A549 (cell line): ENCODE measurements at regions of chr20 and their contacts with region 1.

Region 1: GRCh38 chr20:20017001-20017843 is at the start of gene NAA20:
- DNase-seq: peak; percentile 98
- ATAC-seq: peak; percentile 99
- H3K4me3 ChIP-seq: peak within 1 kb of the TSS; percentile 95
- H3K27ac ChIP-seq: peak within 1 kb of the TSS; percentile 93 to 94
- H3K4me1 ChIP-seq: peaks cover 22% of the 10 kb centered on the region
- CTCF ChIP-seq: peak; percentile 59
- EP300 ChIP-seq: no peak
- POLR2A ChIP-seq: peak; percentile 62
- RAD21 ChIP-seq: peak; percentile 59 to 66
- polyA plus RNA-seq, gene NAA20: 154 and 219 TPM in 2 replicates

Region 2: DNA sequence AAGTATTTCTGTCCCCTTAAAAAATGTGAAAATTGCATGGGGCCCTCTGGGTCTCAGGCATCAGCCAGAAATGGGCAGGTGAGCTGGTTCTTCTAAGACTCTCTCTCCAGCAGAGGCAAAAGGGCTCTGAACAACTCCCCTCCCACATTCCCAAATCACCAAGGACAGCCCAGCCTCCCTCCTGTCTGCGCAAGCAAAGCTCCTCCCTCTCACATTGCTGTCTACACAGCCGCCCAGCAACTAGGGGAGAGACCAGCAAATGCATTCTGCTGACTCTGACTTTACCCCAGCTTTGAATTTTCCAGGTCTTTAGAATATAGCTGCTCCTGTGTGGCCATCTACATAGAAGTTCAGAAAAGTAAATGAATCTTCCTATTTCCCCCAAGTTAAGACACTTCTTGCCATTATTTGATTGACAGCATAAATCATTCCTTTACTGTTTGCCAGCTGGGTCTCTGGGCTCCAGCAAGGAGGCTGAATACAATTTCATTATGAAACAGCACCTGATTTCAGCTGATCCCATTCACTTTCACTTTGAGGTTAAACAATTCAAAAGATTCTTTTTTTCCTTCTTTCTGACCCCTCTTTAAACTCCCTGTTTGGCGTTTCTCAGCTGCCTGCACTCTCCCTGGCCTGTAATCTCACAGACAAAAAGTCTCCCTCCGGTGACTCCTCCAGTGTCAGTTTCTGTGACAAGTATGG is 464.9 kb before region 1 on chr20:
- CTCF ChIA-PET with region 1: no interaction called
- POLR2A ChIA-PET with region 1: no interaction called
- DNase-seq: peak; percentile 19 to 25
- ATAC-seq: peak in 1 of 2 experiments; percentile 85; a peak in 3 of 6 replicates
- H3K4me3 ChIP-seq: no peak overlapping the region
- H3K27ac ChIP-seq: no peak overlapping the region
- H3K4me1 ChIP-seq: no peaks in the 10 kb centered on the region
- CTCF ChIP-seq: no peak
- EP300 ChIP-seq: no peak
- POLR2A ChIP-seq: no peak
- RAD21 ChIP-seq: no peak

Region 3: GRCh38 chr20:19770375-19770774 is 246.8 kb before region 1 on chr20:
- CTCF ChIA-PET with region 1: interaction called, 14 read pairs
- POLR2A ChIA-PET with region 1: no interaction called
- DNase-seq: no peak
- ATAC-seq: no peak
- H3K4me3 ChIP-seq: no peak overlapping the region
- H3K27ac ChIP-seq: no peak overlapping the region
- H3K4me1 ChIP-seq: peaks cover 12% of the 10 kb centered on the region
- CTCF ChIP-seq: no peak
- EP300 ChIP-seq: no peak
- POLR2A ChIP-seq: no peak
- RAD21 ChIP-seq: no peak

Region 4: DNA sequence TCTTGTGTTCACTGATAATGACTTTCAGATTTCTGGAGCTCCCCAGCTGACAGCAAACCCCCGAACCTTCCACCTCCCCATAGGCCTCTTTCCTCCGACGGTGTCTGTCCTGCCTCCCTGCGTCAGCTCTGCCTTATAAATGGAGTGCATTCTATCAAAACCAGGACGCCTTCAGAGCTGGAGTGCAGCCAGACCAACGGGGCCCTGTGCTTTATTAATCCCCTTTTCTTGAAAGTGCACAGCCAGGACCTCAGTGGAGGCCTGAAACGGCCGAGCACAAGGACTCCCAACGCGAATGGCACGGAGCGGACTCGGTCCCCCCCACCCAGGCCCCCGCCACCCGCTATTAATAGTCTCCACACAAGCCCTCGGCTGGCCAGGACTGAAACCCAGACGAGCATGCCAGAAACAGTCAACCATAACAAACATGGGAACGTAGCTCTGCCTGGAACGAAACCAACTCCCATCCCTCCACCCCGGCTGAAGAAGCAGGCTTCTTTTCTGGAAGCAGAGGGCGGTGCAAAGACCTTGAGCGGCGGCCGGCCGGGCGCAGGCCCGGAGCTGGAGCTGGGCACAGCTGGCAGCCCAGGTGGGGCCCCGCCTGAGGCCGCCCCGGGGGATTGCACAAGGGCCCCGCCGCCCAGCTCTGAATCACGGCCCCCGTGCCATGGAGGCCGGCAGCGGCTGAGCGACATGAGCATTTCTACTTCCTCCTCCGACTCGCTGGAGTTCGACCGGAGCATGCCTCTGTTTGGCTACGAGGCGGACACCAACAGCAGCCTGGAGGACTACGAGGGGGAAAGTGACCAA is 42.4 kb before region 1 on chr20:
- CTCF ChIA-PET with region 1: interaction called, 8 read pairs
- POLR2A ChIA-PET with region 1: interaction called, 17 read pairs
- DNase-seq: peak; percentile 77 to 89
- ATAC-seq: peak; percentile 83 to 87
- H3K4me3 ChIP-seq: peak overlapping the region; percentile 65
- H3K27ac ChIP-seq: peak overlapping the region; percentile 94 to 95
- H3K4me1 ChIP-seq: peaks cover 40% of the 10 kb centered on the region
- CTCF ChIP-seq: no peak
- EP300 ChIP-seq: no peak
- POLR2A ChIP-seq: peak; percentile 72
- RAD21 ChIP-seq: peak in 1 of 2 experiments; percentile 31; a peak in 3 of 5 replicates

Region 5: GRCh38 chr20:19995220-19995863 is 21.9 kb before region 1 on chr20:
- CTCF ChIA-PET with region 1: interaction called, 19 read pairs
- POLR2A ChIA-PET with region 1: interaction called, 4 read pairs
- DNase-seq: peak; percentile 55 to 61
- ATAC-seq: no peak
- H3K4me3 ChIP-seq: no peak overlapping the region
- H3K27ac ChIP-seq: peak overlapping the region; percentile 90 to 93
- H3K4me1 ChIP-seq: peaks cover 51% of the 10 kb centered on the region
- CTCF ChIP-seq: peak; percentile 94
- EP300 ChIP-seq: no peak
- POLR2A ChIP-seq: no peak
- RAD21 ChIP-seq: peak; percentile 92 to 93

Region 6: DNA sequence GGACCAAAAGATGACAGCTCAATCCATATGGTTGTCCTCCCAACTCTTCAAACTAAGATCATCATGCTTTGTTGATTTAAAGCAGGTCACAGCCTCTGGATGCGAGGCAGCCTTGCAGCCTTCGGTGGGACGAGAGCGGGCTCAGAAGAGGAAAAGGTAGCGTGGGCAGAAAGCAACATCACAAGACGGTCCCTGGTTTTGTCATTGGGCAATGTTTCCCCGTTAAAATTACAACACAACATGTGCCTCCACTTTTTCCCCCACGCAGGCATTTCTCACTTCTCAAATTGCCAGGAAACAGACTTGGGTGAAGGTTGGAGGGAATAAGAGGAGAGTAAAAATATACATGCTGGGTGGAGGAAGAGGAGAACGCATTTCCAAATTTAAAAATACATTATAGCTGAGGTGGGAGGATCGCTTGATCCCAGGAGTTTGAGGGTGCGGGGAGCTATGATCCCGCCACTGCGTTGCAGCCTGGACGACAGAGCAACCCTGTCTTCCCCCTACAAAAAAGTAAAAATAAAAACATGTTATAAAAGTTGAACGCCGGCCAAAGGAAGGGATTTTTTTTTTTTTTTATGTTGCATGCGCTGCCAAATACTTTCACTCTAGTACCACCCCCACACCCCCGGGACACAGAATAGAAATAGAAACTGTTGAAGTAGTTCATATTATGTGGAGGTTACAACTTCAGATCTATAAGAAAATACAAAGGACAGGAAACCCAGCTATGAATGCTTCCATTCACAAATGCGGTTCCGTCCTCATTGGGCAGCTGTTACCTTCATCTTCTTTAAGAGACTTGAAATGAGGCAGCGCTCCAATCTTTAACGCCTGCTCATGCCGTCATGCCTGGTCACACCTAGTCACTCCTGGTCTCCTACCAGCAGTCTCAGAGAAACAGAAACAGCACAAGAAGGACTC is 13.9 kb before region 1 on chr20:
- CTCF ChIA-PET with region 1: interaction called, 27 read pairs
- POLR2A ChIA-PET with region 1: interaction called, 4 read pairs
- DNase-seq: no peak
- ATAC-seq: no peak
- H3K4me3 ChIP-seq: no peak overlapping the region
- H3K27ac ChIP-seq: no peak overlapping the region
- H3K4me1 ChIP-seq: no peaks in the 10 kb centered on the region
- CTCF ChIP-seq: no peak
- EP300 ChIP-seq: no peak
- POLR2A ChIP-seq: no peak
- RAD21 ChIP-seq: no peak

Region 7: DNA sequence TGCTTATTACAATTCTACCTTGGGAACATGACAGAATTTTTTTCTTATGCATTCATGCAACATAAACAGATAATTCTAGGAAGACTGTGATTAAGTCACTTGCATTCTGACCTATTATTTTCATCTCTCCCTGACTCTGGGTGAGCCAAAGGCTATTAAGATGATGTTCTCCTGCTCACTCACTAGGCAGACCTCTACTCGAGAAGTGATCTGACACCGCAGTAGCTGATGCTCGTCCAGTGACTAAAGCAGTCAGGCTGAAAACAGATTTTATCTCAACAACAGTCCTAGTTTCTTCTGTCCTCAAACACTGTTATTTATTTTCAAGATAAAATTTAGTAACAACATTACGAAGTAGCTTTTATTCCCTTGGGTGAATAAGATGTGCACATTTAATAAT is 17.3 kb after region 1 on chr20:
- CTCF ChIA-PET with region 1: interaction called, 12 read pairs
- POLR2A ChIA-PET with region 1: interaction called, 6 read pairs
- DNase-seq: no peak
- ATAC-seq: no peak
- H3K4me3 ChIP-seq: no peak overlapping the region
- H3K27ac ChIP-seq: no peak overlapping the region
- H3K4me1 ChIP-seq: no peaks in the 10 kb centered on the region
- CTCF ChIP-seq: no peak
- EP300 ChIP-seq: no peak
- POLR2A ChIP-seq: no peak
- RAD21 ChIP-seq: no peak

Region 8: DNA sequence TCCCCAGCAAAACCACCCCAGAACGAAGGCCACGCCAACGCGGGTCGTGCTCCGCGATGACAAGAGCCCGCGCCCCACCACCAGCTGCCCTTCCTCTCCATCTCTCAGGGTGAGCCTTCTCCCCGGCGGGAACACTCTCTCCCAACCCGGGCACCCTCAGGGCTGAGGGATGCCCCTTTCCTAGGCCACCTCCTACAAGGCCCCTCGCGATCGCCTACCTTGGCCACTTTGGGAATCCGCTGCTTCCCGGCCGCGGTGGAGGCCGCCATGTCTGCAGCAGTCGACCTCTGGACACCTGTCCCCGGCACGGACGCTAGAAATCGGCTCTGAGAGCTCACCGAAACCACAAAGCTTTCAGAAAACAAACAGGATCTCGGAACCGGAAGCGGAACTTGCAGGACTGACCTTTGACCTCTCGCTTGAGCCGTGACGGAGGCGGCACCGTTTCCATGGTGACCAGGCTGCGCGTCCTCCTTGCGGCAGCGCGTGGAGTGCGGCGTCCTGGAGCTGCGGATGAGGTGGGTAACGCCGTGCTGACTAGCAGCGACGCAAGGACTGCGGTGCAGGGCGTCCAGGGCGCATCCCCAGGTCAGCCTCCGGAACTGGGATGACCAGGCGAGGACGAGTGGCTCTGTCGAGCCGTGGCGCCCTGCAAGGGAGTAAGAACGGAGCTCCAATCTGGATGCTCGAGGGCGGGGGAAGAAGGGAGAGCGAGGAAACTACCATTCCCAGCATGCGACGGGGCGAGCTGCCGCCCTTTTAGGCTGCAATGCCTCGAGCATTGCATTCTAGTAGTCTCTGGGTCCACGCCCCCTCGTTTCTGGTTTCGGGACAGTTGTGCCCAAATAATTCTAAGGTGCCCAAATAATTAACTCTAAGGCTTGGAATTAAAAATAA is 35.1 kb after region 1 on chr20 and contains the starts of genes CFAP61 and CRNKL1:
- CTCF ChIA-PET with region 1: interaction called, 18 read pairs
- POLR2A ChIA-PET with region 1: interaction called, 26 read pairs
- DNase-seq: peak; percentile 97 to 99
- ATAC-seq: peak; percentile 98
- H3K4me3 ChIP-seq: peak within 1 kb of the TSS; percentile 97
- H3K27ac ChIP-seq: peak within 1 kb of the TSS; percentile 85 to 88
- H3K4me1 ChIP-seq: peaks cover 13% of the 10 kb centered on the region; the same call in 2 of the 3 replicates
- CTCF ChIP-seq: no peak
- EP300 ChIP-seq: no peak
- POLR2A ChIP-seq: peak; percentile 53
- RAD21 ChIP-seq: no peak
- polyA plus RNA-seq, gene CFAP61: 0.70 and 0.86 TPM in 2 replicates
- polyA plus RNA-seq, gene CRNKL1: 23.6 and 32.1 TPM in 2 replicates

Region 9: DNA sequence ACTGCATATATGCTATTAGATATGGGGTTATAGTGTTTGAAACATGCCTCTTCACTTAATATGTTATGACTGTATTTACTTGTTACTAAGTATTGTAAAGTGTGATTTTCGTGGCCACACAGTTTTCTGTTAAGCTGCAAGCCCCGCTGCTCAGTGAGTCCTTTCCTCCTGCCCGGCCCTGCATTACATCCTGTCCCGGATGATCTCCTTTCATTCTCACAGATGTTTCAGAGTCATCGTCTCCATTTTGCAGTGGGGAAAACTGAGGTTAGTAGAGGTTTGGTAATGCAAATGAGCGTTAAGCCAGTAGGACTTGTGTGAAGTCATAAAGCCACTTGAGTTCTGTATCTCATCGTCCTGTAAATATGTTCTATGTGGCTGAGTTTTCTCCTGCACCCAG is 190.7 kb after region 1 on chr20:
- CTCF ChIA-PET with region 1: no interaction called
- POLR2A ChIA-PET with region 1: no interaction called
- DNase-seq: no peak
- ATAC-seq: no peak
- H3K4me3 ChIP-seq: no peak overlapping the region
- H3K27ac ChIP-seq: no peak overlapping the region
- H3K4me1 ChIP-seq: no peaks in the 10 kb centered on the region
- CTCF ChIP-seq: no peak
- EP300 ChIP-seq: no peak
- POLR2A ChIP-seq: no peak
- RAD21 ChIP-seq: no peak

Region 10: DNA sequence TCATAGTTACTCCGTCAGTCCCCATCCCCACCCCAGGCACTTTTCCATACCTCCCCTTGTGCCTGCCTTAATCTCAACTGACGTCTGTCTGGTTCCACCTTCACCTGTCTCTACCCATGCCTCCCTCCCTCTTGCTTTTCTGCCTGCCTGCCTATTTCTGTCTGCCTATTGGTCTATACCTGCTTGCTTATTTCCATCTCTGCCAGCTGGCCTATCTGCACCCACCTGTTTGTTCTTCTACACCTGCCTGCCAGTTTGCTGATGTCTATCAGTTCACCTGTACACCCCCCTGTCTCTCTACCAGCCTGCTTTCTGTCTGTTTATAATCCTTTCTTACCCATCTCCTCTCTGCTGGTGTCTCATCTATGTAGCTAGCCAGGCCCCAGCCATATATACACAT is 607.7 kb after region 1 on chr20:
- CTCF ChIA-PET with region 1: no interaction called
- POLR2A ChIA-PET with region 1: no interaction called
- DNase-seq: no peak
- ATAC-seq: no peak
- H3K4me3 ChIP-seq: no peak overlapping the region
- H3K27ac ChIP-seq: no peak overlapping the region
- H3K4me1 ChIP-seq: no peaks in the 10 kb centered on the region
- CTCF ChIP-seq: no peak
- EP300 ChIP-seq: no peak
- POLR2A ChIP-seq: no peak
- RAD21 ChIP-seq: no peak